ENCODE measurements at regions of chr17 and their contacts with region 1.

Region 1: GRCh38 chr17:6421700-6422604 is 13.0 kb downstream of the AIPL1 start:
- DNase-seq: peak; percentile 53 to 62 (median 57)
- H3K4me3 ChIP-seq: no peak overlapping the region
- H3K4me3 Mint-ChIP-seq: no peak overlapping the region
- H3K27ac ChIP-seq: no peak overlapping the region
- H3K27ac Mint-ChIP-seq: peak overlapping the region in 1 of 7 donors; percentile 42
- H3K4me1 ChIP-seq: peaks cover 7% of the 10 kb centered on the region
- H3K4me1 Mint-ChIP-seq: peaks cover 2 to 11% (median 7%) of the 10 kb centered on the region in 4 donors
- H3K27me3 ChIP-seq: peaks cover 4% of the 10 kb centered on the region
- H3K27me3 Mint-ChIP-seq: peaks cover 2 to 14% of the 10 kb centered on the region in 2 donors

Region 2: DNA sequence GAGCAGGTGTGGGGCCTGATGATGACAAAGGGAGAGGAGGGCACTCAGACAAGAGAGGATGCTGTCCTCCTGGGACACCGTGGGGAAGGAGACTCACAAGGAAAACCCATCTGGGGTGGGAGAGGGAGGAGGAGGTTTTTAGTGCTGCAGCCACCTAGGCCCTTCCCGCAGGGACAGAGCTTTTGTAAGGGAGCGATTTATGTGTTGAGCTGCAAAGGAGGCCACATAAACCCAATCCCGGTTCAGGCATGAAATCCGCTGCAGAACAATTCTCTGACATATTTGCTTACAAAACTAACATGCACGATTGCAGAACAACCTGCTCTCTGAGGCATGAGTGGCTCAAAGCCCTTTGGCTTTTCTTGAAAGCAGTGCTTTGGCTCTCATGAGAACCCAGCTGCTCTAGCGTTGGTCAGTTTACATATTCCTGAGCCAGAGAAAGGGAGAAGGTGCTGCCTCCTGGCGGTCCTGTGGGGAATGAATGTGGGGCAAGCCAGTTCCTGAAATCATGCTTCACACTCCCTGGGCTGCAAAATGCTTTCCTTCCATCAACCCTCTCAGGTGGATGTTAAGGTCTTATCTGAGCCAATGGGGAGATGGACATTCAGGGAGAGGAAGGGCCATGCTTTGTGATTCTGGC is 715.3 kb before region 1 on chr17:
- CTCF ChIA-PET with region 1: no interaction called
- POLR2A ChIA-PET with region 1: no interaction called
- intact Hi-C with region 1: loop called (anchors 10 kb)
- DNase-seq: peak in 4 of 5 donors; percentile 29 to 45 (median 40)
- H3K4me3 ChIP-seq: no peak overlapping the region
- H3K4me3 Mint-ChIP-seq: no peak overlapping the region
- H3K27ac ChIP-seq: no peak overlapping the region
- H3K27ac Mint-ChIP-seq: no peak overlapping the region
- H3K4me1 ChIP-seq: no peaks in the 10 kb centered on the region
- H3K4me1 Mint-ChIP-seq: no peaks in the 10 kb centered on the region
- H3K27me3 ChIP-seq: no peaks in the 10 kb centered on the region
- H3K27me3 Mint-ChIP-seq: peaks cover 14 to 28% of the 10 kb centered on the region in 2 donors

Region 3: GRCh38 chr17:6435968-6436367 is 14.0 kb after region 1 on chr17:
- CTCF ChIA-PET with region 1: interaction called, 19 read pairs
- POLR2A ChIA-PET with region 1: no interaction called
- intact Hi-C with region 1: no loop called
- DNase-seq: peak; percentile 52 to 67 (median 58)
- H3K4me3 ChIP-seq: no peak overlapping the region
- H3K4me3 Mint-ChIP-seq: no peak overlapping the region
- H3K27ac ChIP-seq: no peak overlapping the region
- H3K27ac Mint-ChIP-seq: no peak overlapping the region
- H3K4me1 ChIP-seq: no peaks in the 10 kb centered on the region
- H3K4me1 Mint-ChIP-seq: peaks cover 0 to 4% (median 0%) of the 10 kb centered on the region in 4 donors
- H3K27me3 ChIP-seq: peaks cover 4% of the 10 kb centered on the region
- H3K27me3 Mint-ChIP-seq: peaks cover 16 to 18% of the 10 kb centered on the region in 2 donors